Left colon (tissue), 2 donors: ENCODE measurements at regions of chr17 and their contacts with region 1.

Region 1: GRCh38 chr17:41442739-41443138 is 2.0 kb upstream of the KRT38 start:
- DNase-seq: no peak
- ATAC-seq: no peak

Region 2: GRCh38 chr17:41382396-41382795 is 60.3 kb before region 1 on chr17:
- intact Hi-C with region 1: loop called in 1 of 2 experiments (anchors 10 kb)
- DNase-seq: no peak
- ATAC-seq: no peak

Region 3: GRCh38 chr17:41496820-41497408 is 54.2 kb after region 1 on chr17:
- intact Hi-C with region 1: no loop called
- DNase-seq: peak; percentile 82 to 91
- ATAC-seq: peak; percentile 97